ENCODE measurements at regions of chr9 and their contacts with region 1.

Region 1: DNA sequence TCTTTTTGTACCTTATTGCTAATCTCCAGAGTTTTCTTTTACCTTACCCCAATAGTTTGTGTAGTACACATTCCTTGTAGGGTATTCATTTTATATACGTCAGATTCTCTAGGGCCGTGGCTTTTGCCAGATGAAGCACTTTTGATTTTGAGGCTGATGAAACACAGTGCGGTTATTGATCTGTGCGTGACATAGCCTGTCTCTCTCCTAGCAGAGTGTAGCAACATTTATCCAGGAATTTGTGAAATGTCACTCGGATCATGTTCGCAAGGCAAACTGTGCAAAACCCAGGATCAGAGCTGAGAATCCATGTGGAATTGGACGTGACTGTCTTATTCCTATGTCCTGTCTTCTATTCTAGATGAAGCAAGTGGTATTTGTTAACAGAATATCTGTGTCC is 142.0 kb upstream of the SH3GL2 start:
- DNase-seq: no peak

Region 2: DNA sequence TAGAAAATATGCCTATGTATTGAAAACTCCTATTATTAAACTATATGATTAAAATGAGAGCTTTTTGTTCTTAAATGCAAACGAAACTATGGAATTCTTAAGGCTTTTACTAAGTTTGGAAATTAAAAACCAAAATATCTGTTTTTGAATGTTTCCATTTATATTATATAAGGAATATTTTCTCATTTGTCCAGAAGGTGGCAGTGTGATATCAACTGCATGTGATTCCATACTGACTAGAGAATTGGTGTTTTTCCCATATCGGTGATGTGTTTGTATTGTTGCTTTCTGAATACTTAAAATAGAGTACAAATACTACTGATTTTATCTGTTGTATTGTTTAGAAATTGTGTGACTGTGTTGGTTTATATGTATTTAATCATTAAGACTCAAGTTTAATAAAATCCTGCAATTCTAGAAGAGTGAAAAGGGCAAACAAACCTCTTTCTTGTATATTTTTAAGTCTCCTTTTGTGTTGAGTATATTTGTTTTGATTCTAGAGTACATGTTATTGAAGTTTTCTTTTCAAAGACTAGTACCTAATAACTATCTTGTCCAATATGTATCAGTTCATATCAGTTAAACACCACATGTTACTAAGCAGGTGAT is 1563.2 kb before region 1 on chr9:
- intact Hi-C with region 1: loop called in 1 of 2 experiments (anchors 5 kb)
- DNase-seq: no peak

Measured in posterior vena cava (tissue), 2 donors.